ENCODE measurements at regions of chr12 and their contacts with region 1.

Region 1: GRCh38 chr12:27332407-27333301 is at the start of gene BMAL2:
- DNase-seq: peak in 1 of 2 experiments; percentile 79
- H3K4me3 ChIP-seq: peak within 1 kb of the TSS; percentile 80
- H3K27ac ChIP-seq: peak within 1 kb of the TSS; percentile 93
- H3K4me1 ChIP-seq: peaks cover 66% of the 10 kb centered on the region
- H3K27me3 ChIP-seq: no peaks in the 10 kb centered on the region
- CTCF ChIP-seq: no peak
- total RNA-seq, gene BMAL2: 56.7 and 87.9 TPM in 2 replicates

Region 2: GRCh38 chr12:26113853-26114719 is 1218.6 kb before region 1 on chr12:
- CTCF ChIA-PET with region 1: no interaction called
- POLR2A ChIA-PET with region 1: no interaction called
- intact Hi-C with region 1: loop called (anchors 10 kb)
- DNase-seq: peak; percentile 91 to 92
- H3K4me3 ChIP-seq: peak overlapping the region; percentile 57
- H3K27ac ChIP-seq: peak overlapping the region; percentile 93
- H3K4me1 ChIP-seq: peaks cover 61% of the 10 kb centered on the region
- H3K27me3 ChIP-seq: no peaks in the 10 kb centered on the region
- CTCF ChIP-seq: peak; percentile 46

Region 3: GRCh38 chr12:27243804-27244683 is 88.6 kb before region 1 on chr12 and contains the start of gene STK38L:
- CTCF ChIA-PET with region 1: no interaction called
- POLR2A ChIA-PET with region 1: no interaction called
- intact Hi-C with region 1: no loop called
- DNase-seq: peak; percentile 93 to 100
- H3K4me3 ChIP-seq: peak within 1 kb of the TSS; percentile 64
- H3K27ac ChIP-seq: peak within 1 kb of the TSS; percentile 75
- H3K4me1 ChIP-seq: peaks cover 19% of the 10 kb centered on the region
- H3K27me3 ChIP-seq: no peaks in the 10 kb centered on the region
- CTCF ChIP-seq: peak; percentile 56
- total RNA-seq, gene STK38L: 34.7 and 40.0 TPM in 2 replicates

Region 4: GRCh38 chr12:27305673-27306456 is 26.8 kb before region 1 on chr12:
- CTCF ChIA-PET with region 1: interaction called, 3 read pairs
- POLR2A ChIA-PET with region 1: interaction called, 14 read pairs
- intact Hi-C with region 1: no loop called
- DNase-seq: peak in 1 of 2 experiments; percentile 59
- H3K4me3 ChIP-seq: no peak overlapping the region
- H3K27ac ChIP-seq: no peak overlapping the region
- H3K4me1 ChIP-seq: no peaks in the 10 kb centered on the region
- H3K27me3 ChIP-seq: no peaks in the 10 kb centered on the region
- CTCF ChIP-seq: peak; percentile 84

Region 5: DNA sequence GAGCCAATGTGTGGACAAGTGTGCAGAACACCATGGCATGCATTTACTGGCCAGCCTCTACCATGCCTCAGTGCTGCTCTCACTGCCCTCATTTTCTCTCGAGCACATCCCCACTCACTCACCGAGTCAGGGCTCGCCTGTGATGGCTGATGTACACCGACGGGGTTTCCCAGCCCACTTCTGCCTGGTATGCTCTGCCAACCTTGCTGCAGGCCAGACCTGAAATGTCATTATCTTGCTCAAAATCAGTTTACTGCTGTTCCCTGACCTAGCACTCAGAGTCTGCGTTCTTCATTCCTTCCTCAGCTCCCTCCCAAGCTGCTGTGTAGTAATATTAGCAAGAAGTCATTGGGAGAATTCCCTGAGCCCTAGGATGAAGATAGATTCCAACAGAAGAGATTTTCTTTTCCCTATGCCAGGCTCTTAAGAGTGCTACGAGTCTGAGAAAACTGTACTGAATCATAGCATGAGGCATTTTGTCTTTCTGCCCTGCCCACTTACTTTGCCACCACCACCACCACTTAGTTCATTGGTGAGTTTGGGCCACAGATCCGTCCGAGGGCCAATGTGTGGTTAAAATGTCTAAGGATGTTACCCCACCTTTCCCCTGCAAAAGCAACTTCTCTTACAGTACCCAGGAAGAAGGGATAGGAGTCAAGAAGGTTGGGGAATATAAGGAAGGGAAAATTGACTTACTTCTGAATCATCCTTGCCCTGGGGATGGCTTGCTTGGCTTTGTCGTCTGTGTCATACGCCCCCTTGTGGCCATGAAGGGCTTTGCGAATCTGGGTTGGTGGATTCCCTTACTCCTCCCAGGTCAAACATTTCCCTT is 51.0 kb after region 1 on chr12:
- CTCF ChIA-PET with region 1: no interaction called
- POLR2A ChIA-PET with region 1: interaction called, 5 read pairs
- intact Hi-C with region 1: loop called (anchors 1 kb)
- DNase-seq: peak; percentile 70 to 89
- H3K4me3 ChIP-seq: no peak overlapping the region
- H3K27ac ChIP-seq: peak overlapping the region; percentile 61
- H3K4me1 ChIP-seq: peaks cover 8% of the 10 kb centered on the region; the same call in 1 of the 2 replicates
- H3K27me3 ChIP-seq: no peaks in the 10 kb centered on the region
- CTCF ChIP-seq: peak; percentile 95

Region 6: DNA sequence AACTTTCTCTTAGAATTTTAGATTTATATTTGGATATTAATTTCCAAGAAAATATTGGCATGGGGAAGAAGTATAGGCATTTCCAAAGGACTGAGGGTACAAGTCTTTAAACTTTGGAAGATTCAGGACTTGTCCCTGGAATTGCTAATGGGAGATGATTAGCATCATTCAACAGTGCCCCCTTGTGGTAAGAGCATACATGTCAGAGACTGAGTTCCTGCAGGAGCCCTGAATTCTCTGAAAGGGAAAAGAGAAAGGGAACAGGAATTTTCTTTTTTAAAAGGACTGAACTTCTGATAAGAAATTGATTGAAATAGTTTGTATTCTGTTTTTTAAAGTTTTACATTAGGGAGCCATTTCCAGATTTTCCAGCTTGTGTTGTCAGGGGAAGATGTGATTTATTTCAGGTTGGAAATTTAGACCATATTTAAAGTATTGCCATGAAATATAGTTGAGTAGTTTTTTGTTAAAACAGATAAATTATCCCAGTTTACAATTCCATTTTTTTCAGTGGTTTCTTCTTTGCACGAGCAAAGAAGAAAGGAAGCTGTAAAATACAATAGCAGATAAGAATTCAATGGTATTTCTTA is 319.6 kb after region 1 on chr12:
- CTCF ChIA-PET with region 1: no interaction called
- POLR2A ChIA-PET with region 1: no interaction called
- intact Hi-C with region 1: loop called (anchors 5 kb)
- DNase-seq: peak; percentile 42 to 58
- H3K4me3 ChIP-seq: no peak overlapping the region
- H3K27ac ChIP-seq: no peak overlapping the region
- H3K4me1 ChIP-seq: no peaks in the 10 kb centered on the region
- H3K27me3 ChIP-seq: no peaks in the 10 kb centered on the region
- CTCF ChIP-seq: peak; percentile 95